ENCODE measurements at regions of chr3 and their contacts with region 1.

Region 1: GRCh38 chr3:42660893-42661292 is 7.4 kb downstream of the ZBTB47 start:
- DNase-seq: peak in 1 of 2 experiments; percentile 47
- H3K4me3 ChIP-seq: no peak overlapping the region
- H3K27ac ChIP-seq: no peak overlapping the region
- H3K4me1 ChIP-seq: no peaks in the 10 kb centered on the region
- H3K27me3 ChIP-seq: no peaks in the 10 kb centered on the region
- CTCF ChIP-seq: peak in 2 of 3 experiments; percentile 56 to 66; a peak in 3 of 4 replicates
- EP300 ChIP-seq: no peak
- POLR2A ChIP-seq: no peak
- RAD21 ChIP-seq: peak; percentile 37 to 59

Region 2: GRCh38 chr3:42711491-42712343 is 50.8 kb after region 1 on chr3:
- CTCF ChIA-PET with region 1: interaction called, 22 read pairs
- POLR2A ChIA-PET with region 1: interaction called, 3 read pairs
- DNase-seq: peak in 1 of 2 experiments; percentile 44
- H3K4me3 ChIP-seq: no peak overlapping the region
- H3K27ac ChIP-seq: no peak overlapping the region
- H3K4me1 ChIP-seq: no peaks in the 10 kb centered on the region; a peak in 2 of 7 replicates
- H3K27me3 ChIP-seq: no peaks in the 10 kb centered on the region; a peak in 1 of 7 replicates
- CTCF ChIP-seq: peak in 2 of 3 experiments; percentile 26 to 28; a peak in 2 of 4 replicates
- EP300 ChIP-seq: no peak
- POLR2A ChIP-seq: no peak
- RAD21 ChIP-seq: 0 out of 4 replicates have a peak, but pooled peaks of 1 of the 2 experiments have one; percentile 10

Region 3: GRCh38 chr3:42739401-42740158 is 78.7 kb after region 1 on chr3:
- CTCF ChIA-PET with region 1: interaction called, 54 read pairs
- POLR2A ChIA-PET with region 1: interaction called, 4 read pairs
- DNase-seq: peak in 1 of 2 experiments; percentile 41
- H3K4me3 ChIP-seq: no peak overlapping the region
- H3K27ac ChIP-seq: no peak overlapping the region
- H3K4me1 ChIP-seq: peaks cover 0 to 12% (median 6%) of the 10 kb centered on the region in 4 experiments; a peak in 4 of 7 replicates
- H3K27me3 ChIP-seq: 0 out of 7 replicates have a peak, but pooled peaks cover 0 to 3% (median 0%) of the 10 kb centered on the region in 4 experiments
- CTCF ChIP-seq: no peak
- EP300 ChIP-seq: no peak
- POLR2A ChIP-seq: no peak
- RAD21 ChIP-seq: no peak

Region 4: DNA sequence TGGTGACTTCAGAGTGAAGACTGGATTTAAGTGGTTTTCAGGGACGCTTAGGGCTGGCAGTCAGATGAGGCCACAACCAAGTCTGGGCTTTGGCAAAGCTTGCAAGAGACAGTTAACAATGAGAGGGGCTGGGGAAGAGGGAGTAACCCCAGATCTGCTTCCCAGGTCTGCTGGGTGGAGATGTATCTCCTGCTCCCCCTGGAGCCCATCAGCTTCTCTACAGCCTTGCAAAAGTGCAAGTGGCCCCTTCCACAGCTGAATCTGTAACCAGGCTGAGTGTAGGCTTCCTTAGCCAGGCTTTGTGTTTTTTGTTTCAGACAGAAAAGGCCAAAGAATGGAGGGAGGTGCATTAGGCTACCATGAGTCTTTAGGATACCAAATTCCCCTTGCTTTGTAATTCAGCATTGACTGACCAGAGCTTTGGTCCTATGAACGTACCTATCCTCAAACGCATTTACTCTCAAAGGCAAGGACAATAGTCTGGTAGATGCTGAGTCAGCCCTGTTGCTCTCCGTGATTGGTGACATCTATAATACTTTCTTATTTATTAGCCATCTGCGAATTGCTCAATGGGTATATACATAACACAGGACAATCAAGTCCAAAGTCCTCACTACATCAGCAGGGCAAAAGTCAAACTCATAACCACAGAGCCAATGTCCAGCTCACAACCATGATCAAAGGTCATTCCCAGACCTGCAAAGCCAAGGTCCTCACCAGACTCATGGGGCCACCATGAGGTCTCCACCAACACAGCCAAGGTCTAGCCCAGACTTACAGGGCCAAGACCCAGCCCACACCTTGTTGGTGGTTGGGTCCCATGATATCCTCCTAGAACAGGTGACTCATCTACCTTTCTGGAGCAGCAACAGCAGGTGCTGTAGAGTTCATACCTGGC is 95.0 kb after region 1 on chr3:
- CTCF ChIA-PET with region 1: interaction called, 32 read pairs
- POLR2A ChIA-PET with region 1: no interaction called
- DNase-seq: peak in 1 of 2 experiments; percentile 52
- H3K4me3 ChIP-seq: no peak overlapping the region
- H3K27ac ChIP-seq: no peak overlapping the region
- H3K4me1 ChIP-seq: no peaks in the 10 kb centered on the region
- H3K27me3 ChIP-seq: no peaks in the 10 kb centered on the region
- CTCF ChIP-seq: peak; percentile 63 to 89 (median 73)
- EP300 ChIP-seq: no peak
- POLR2A ChIP-seq: no peak
- RAD21 ChIP-seq: peak; percentile 75 to 83

Measured in H1 (cell line).